ENCODE measurements at regions of chr9 and their contacts with region 1.

Region 1: DNA sequence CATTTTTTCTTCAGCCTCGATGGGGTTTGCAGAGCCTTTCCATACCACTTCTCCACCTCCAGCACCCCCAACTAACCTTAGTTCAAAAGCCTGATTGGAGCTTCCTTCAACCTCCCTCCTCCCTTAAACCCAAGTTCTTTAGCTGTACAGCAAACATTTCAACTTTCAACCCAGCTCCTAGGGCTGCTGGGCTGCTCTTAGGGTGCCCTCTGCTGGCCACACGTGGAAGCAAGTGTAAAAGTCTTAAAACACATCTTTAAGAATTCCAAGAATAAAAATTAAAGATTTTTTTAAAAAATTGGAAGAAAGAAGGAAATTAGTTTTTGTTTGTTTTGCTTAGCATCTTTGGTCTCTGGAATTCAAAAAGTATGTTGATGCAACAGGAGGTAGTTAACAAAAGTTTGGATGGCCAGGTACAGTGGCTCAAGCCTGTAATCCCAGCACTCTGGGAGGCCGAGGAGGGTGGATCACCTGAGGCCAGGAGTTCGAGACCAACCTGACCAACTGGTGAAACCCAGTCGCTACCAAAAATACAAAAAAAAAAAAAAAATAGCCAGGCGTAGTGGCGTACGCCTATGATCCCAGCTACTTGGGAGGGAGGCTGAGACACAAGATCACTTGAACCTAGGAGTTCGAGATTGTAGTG is 15.5 kb upstream of the HSD17B3 start:
- DNase-seq: peak; percentile 73
- H3K4me3 ChIP-seq: no peak overlapping the region; a peak in 1 of 4 replicates
- H3K27ac ChIP-seq: no peak overlapping the region
- H3K4me1 ChIP-seq: no peaks in the 10 kb centered on the region
- H3K27me3 ChIP-seq: no peaks in the 10 kb centered on the region
- CTCF ChIP-seq: peak; percentile 99
- EP300 ChIP-seq: no peak
- RAD21 ChIP-seq: peak; percentile 92

Region 2: GRCh38 chr9:96232539-96233241 is 84.8 kb before region 1 on chr9:
- CTCF ChIA-PET with region 1: interaction called, 71 read pairs
- POLR2A ChIA-PET with region 1: no interaction called
- DNase-seq: peak; percentile 70
- H3K4me3 ChIP-seq: no peak overlapping the region; a peak in 1 of 4 replicates
- H3K27ac ChIP-seq: no peak overlapping the region
- H3K4me1 ChIP-seq: no peaks in the 10 kb centered on the region
- H3K27me3 ChIP-seq: no peaks in the 10 kb centered on the region
- CTCF ChIP-seq: peak; percentile 93
- EP300 ChIP-seq: no peak
- RAD21 ChIP-seq: peak; percentile 75

Region 3: DNA sequence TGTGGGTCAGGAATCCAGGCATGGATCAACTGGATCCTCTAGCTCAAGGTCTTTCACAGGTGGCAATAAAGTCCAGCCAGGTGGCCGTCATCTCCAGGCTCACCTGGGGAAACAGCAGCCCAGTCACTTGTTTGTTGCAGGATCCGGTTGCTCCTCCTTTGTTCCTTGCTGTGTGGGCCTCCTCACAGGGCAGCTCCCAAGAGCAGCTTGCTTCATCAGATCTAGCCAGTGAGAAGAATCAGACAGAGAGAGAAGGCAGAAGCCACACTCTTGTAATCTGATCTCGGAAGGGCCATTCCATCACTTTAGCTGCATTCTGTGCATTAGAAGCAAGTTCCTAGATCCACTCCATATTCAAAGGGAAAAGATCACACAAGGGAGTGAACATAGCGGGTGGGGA is 12.3 kb before region 1 on chr9:
- CTCF ChIA-PET with region 1: interaction called, 15 read pairs
- POLR2A ChIA-PET with region 1: no interaction called
- DNase-seq: no peak
- H3K4me3 ChIP-seq: no peak overlapping the region
- H3K27ac ChIP-seq: no peak overlapping the region
- H3K4me1 ChIP-seq: 0 out of 4 replicates have a peak, but pooled peaks cover 0 to 6% of the 10 kb centered on the region in 2 experiments
- H3K27me3 ChIP-seq: no peaks in the 10 kb centered on the region
- CTCF ChIP-seq: no peak
- EP300 ChIP-seq: no peak
- RAD21 ChIP-seq: no peak

Region 4: DNA sequence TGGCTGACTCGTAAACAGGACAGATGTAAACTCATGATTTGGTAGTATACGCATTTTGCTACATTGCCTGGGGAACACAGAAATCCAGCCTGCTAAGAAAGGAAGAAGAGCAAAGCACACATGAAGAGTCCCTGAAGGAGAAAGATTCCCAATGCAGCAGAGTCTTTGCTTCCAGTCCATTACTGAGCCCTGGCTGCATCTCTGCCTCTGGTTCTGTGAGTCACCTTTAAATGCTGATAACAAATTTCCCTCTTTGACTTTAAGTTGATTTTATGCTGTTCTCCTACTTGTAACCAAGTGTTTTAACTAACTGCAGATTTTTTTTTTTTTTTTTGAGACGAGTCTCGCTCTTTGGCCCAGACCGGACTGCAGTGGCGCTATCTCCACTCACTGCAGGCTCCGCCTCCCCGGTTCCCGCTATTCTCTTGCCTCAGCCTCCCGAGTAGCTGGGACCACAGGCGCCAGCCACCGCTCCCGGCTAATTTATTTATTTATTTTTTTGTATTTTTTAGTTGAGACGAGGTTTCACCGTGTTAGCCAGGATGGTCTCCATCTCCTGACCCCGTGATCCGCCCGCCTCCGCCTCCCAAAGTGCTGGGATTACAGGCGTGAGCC is 346.2 kb after region 1 on chr9:
- CTCF ChIA-PET with region 1: interaction called, 12 read pairs
- POLR2A ChIA-PET with region 1: no interaction called
- DNase-seq: no peak
- H3K4me3 ChIP-seq: no peak overlapping the region
- H3K27ac ChIP-seq: no peak overlapping the region
- H3K4me1 ChIP-seq: no peaks in the 10 kb centered on the region
- H3K27me3 ChIP-seq: no peaks in the 10 kb centered on the region
- CTCF ChIP-seq: no peak
- EP300 ChIP-seq: no peak
- RAD21 ChIP-seq: no peak

Measured in SK-N-SH (cell line).